ENCODE measurements at regions of chr4 and their contacts with region 1.

Region 1: DNA sequence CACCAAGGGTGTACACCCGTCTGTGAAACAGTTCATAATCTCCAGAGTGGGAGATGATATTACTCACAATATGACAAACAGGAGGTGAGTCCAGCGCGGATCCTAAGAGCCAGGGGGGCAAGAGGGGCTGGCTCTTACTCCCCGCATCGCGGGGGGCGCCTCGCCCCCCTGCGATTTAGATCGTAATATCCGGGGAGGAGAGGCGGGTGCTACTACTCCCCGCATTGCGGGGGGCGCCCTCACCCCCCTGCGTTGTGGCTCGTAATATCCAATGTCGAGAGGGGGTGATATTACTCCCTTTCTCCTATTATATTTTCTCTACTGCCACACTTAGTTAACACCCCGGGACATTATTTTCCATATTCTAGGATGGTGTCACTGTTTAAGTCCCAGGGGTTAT is 131.9 kb downstream of the ADRA2C start:
- DNase-seq: no peak
- H3K4me3 ChIP-seq: no peak overlapping the region
- H3K27ac ChIP-seq: no peak overlapping the region
- H3K4me1 ChIP-seq: no peaks in the 10 kb centered on the region
- CTCF ChIP-seq: no peak

Region 2: GRCh38 chr4:3442959-3443749 is 454.9 kb before region 1 on chr4:
- CTCF ChIA-PET with region 1: no interaction called
- POLR2A ChIA-PET with region 1: no interaction called
- intact Hi-C with region 1: no loop called
- DNase-seq: peak; percentile 70
- H3K4me3 ChIP-seq: no peak overlapping the region
- H3K27ac ChIP-seq: no peak overlapping the region
- H3K4me1 ChIP-seq: no peaks in the 10 kb centered on the region
- CTCF ChIP-seq: peak; percentile 85

Region 3: DNA sequence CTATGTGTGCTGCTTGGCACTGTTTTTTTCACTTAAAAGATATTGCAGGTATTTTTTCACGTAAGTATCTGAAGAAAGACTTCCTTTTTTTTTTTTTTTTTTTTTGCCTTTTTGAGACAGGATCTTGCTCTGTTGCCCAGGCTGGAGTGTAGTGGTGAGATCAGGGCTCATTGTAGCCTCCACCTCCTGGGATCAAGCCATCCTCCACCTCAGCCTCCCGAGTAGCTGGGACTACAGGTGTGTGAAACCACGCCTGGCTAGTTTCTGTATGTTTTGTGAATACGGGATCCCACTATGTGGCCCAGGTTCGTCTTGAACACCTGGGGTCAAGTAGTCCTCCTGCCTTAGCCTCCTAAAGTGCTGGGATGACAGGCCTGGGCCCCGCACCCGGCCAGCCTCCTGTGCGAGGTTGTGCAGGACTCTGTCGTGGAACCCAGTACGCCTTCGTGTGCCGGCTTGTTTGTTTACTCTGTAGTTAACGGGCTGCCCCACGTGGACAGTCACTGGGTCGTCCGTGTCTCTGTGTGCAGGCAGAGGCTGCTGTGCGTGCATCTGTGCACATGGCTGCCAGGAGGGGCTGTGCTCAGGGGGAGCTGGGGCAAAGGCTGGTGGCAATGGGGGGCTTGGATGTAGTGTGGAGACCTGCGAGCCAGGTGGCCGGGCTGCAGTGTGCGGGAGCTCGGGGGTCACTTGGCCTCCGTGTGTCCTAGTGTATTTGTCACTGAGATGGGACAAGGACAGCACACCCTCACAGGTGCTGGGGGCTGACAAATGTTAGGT is 47.6 kb after region 1 on chr4:
- CTCF ChIA-PET with region 1: no interaction called
- POLR2A ChIA-PET with region 1: no interaction called
- intact Hi-C with region 1: loop called (anchors 10 kb)
- DNase-seq: no peak
- H3K4me3 ChIP-seq: no peak overlapping the region
- H3K27ac ChIP-seq: no peak overlapping the region
- H3K4me1 ChIP-seq: peaks cover 12% of the 10 kb centered on the region
- CTCF ChIP-seq: no peak

Measured in OCI-LY7 (cell line).